ENCODE measurements at regions of chr12 and their contacts with region 1.

Region 1: GRCh38 chr12:12032851-12033588 is 37.7 kb upstream of the BCL2L14 start:
- DNase-seq: peak; percentile 62 to 85
- ATAC-seq: peak; percentile 81 to 89 (median 84)
- H3K4me3 ChIP-seq: peak overlapping the region; percentile 60
- H3K27ac ChIP-seq: no peak overlapping the region
- H3K4me1 ChIP-seq: no peaks in the 10 kb centered on the region
- H3K27me3 ChIP-seq: no peaks in the 10 kb centered on the region
- CTCF ChIP-seq: peak; percentile 91

Region 2: DNA sequence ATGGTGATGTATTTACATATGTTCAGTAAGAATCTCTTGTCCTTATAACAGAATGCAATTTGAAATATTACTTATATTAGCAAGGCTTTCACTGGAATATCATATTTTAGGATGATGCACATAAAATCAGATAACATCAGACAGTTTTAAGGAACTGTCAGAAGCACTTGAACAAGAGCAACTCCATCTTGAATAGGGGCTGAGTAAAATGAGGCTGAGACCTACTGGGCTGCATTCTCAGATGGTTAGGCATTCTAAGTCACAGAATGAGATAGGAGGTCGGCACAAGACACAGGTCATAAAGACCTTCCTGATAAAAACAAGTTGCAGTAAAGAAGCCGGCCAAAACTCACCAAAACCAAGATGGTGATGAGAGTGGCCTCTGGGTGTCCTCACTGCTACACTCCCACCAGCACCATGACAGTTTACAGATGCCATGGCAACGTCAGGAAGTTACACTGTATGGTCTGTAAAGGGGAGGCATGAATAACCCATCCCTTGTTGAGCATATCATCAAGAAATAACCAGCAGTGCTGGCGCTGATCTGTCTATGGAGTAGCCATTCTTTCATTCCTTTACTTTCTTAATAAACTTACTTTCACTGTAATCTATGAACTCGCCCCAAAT is 411.1 kb before region 1 on chr12:
- intact Hi-C with region 1: loop called in 1 of 2 experiments (anchors 5 kb)
- DNase-seq: no peak
- ATAC-seq: peak in 1 of 4 donors; percentile 62
- H3K4me3 ChIP-seq: no peak overlapping the region
- H3K27ac ChIP-seq: no peak overlapping the region
- H3K4me1 ChIP-seq: no peaks in the 10 kb centered on the region
- H3K27me3 ChIP-seq: no peaks in the 10 kb centered on the region
- CTCF ChIP-seq: peak; percentile 35